Motor neuron (in vitro differentiated cells): ENCODE measurements at regions of chr3 and their contacts with region 1.

Region 1: DNA sequence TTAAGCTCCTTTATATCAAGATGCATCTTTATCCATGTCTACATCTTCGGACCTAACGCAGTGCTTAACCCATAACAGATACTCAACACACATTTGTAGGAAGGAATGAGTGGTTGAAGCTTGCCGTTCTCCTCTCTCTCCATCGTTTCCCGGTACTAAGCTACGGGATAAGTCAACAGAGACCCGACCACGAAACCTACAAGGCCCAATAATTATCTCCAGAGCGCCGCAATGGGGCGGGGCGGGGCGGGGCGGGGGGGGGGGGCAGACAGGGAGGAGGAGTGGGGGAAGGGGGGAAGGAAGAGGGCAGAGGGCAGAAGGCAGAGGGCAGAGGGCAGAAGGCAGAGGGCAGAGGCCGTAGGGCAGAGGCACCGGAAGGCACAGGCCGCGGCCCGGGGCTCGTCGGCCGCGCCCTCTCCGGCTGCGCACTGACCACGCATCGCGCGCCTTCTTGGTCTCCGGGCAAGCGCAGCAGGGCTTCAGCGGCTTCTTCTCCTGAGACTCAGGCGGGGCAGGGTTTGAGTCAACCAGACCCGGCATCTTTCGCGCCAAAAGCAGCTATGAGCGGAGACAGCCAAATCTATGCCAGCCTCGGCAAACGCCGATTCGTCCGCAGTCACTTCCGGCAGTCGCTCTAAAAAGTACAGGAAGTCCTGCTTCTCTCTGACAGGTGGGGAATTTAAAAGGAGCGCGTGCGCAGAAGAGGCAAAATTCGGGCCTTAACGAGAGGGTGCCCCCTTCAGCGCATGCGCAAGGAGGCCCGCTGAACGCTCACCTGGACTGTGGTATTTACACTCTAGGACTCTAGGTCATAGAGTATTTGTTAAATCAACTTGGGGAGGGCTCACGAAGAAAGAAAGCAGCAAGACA is at the start of gene COX17:
- ATAC-seq: peak; percentile 92 to 97 (median 94)
- H3K4me3 ChIP-seq: peak within 1 kb of the TSS; percentile 44 to 92 (median 56)
- H3K27ac ChIP-seq: peak within 1 kb of the TSS; percentile 25 to 80
- H3K4me1 ChIP-seq: peaks cover 3 to 17% of the 10 kb centered on the region in 2 donors
- total RNA-seq, gene COX17: 46.4 to 71.4 (median 54.9) TPM

Region 2: GRCh38 chr3:118884748-118885206 is 792.2 kb before region 1 on chr3:
- in situ Hi-C with region 1: loop called in 1 of 9 experiments (anchors 25 kb)
- ATAC-seq: peak; percentile 64 to 94 (median 78)
- H3K4me3 ChIP-seq: no peak overlapping the region
- H3K27ac ChIP-seq: no peak overlapping the region
- H3K4me1 ChIP-seq: no peaks in the 10 kb centered on the region

Region 3: DNA sequence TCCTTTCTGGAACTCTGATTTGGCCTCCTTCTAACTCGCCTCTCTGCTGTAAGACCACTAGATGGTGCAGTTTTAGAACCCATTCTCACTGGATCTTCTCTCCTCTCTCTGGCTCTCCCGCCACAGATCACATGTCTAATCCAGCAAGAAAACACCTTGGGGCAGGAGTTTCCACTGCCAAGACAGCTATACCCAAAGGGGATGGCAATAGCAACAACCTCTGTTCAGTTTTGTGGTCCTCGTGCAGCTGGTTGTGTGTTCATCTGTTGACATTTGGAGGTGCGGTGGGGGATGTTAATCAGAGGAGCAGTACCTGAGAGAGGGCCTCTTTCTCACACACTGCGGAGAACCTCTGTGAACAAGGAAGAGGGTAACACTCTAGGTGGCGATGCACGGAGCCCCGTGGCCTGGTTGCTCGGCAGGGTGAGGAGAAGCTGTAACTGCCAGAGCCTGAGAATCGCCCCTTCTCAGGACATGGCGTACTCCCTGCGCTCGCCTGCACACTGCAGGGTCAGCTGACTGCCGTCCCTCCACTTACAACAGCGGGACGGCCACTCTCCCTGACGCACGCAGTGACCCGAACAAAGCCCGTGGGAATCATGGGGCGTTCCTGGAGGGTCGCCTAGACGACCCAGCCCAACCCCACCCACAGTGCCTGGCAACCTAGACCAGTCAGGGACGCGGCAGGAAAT is 531.4 kb before region 1 on chr3 and contains the start of gene TEX55:
- in situ Hi-C with region 1: loop called in 1 of 9 experiments (anchors 25 kb)
- ATAC-seq: peak in 3 of 8 experiments; percentile 96 to 99 (median 98)
- H3K4me3 ChIP-seq: no peak within 1 kb of the TSS
- H3K27ac ChIP-seq: no peak within 1 kb of the TSS
- H3K4me1 ChIP-seq: no peaks in the 10 kb centered on the region
- total RNA-seq, gene TEX55: 0.20 to 0.66 (median 0.46) TPM in 5 of 8 experiments, not detected in the others

Region 4: GRCh38 chr3:119293871-119294695 is 382.9 kb before region 1 on chr3 and contains the start of gene ARHGAP31:
- in situ Hi-C with region 1: loop called in 1 of 9 experiments (anchors 25 kb)
- ATAC-seq: peak; percentile 56 to 77 (median 70)
- H3K4me3 ChIP-seq: peak within 1 kb of the TSS; percentile 37 to 65 (median 46)
- H3K27ac ChIP-seq: peak within 1 kb of the TSS; percentile 61 to 73
- H3K4me1 ChIP-seq: peaks cover 17 to 22% of the 10 kb centered on the region in 2 donors
- total RNA-seq, gene ARHGAP31: 0.58 to 15.6 (median 3.8) TPM

Region 5: DNA sequence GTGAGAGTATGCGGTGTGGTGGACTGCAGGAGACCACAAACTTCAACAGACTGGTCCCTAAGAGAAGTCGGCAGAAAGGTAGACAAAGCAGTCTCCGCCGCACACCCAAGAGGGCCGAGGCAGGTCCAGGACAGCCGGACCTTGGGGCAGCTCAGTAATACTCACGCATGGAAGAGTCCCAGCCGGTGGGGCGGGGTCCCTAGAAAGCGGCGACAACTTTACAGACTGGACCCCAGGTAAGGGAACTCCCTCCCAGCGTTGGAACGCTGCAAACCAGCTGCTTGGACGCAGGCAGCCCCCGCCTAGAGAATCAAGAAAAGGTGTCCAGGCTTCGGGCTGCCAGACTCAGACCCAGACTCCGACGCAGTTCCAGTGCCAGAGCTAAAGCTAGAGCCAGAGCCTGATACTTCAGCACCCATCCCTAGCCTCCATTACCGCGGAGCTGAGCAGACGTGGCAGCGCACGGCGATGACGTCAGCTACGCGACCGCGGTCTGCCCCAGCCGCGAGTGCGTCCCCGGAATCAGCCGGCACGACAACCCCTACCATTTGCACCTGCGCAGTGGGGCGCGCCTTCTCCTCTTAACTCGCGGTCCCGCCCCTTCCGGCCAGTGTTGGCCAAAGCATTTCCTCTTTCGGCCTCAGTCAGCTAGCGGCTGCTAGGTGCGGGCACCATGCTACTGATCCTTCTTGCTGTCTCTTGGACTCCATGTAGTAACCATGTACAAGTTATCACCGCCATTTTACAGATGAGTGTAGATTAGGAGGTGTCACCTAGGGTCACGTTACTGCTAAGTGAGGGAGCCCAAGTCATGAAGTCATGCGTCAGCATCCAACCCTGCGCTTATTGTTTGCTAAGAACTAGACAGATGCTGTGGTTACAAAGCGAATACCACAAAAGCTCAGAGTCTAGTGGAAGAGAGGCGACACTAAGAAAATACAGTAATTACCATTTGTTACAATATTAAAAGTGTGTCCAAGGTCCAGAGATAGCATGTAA is 213.5 kb before region 1 on chr3 and contains the start of gene TMEM39A:
- in situ Hi-C with region 1: loop called in 1 of 9 experiments (anchors 25 kb)
- ATAC-seq: peak; percentile 95 to 98 (median 96)
- H3K4me3 ChIP-seq: peak within 1 kb of the TSS; percentile 74 to 92 (median 84)
- H3K27ac ChIP-seq: peak within 1 kb of the TSS; percentile 95 to 99
- H3K4me1 ChIP-seq: peaks cover 14 to 24% of the 10 kb centered on the region in 2 donors
- total RNA-seq, gene TMEM39A: 10.6 to 27.5 (median 23.1) TPM

Region 6: GRCh38 chr3:119494597-119494996 is 182.4 kb before region 1 on chr3:
- in situ Hi-C with region 1: no loop called
- ATAC-seq: no peak
- H3K4me3 ChIP-seq: no peak overlapping the region
- H3K27ac ChIP-seq: no peak overlapping the region
- H3K4me1 ChIP-seq: peaks cover 5 to 12% of the 10 kb centered on the region in 2 donors

Region 7: GRCh38 chr3:119506631-119507030 is 170.4 kb before region 1 on chr3:
- in situ Hi-C with region 1: no loop called
- ATAC-seq: no peak
- H3K4me3 ChIP-seq: no peak overlapping the region
- H3K27ac ChIP-seq: no peak overlapping the region
- H3K4me1 ChIP-seq: no peaks in the 10 kb centered on the region